Gastrocnemius medialis (tissue), 4 donors: ENCODE measurements at regions of chr11 and their contacts with region 1.

Region 1: DNA sequence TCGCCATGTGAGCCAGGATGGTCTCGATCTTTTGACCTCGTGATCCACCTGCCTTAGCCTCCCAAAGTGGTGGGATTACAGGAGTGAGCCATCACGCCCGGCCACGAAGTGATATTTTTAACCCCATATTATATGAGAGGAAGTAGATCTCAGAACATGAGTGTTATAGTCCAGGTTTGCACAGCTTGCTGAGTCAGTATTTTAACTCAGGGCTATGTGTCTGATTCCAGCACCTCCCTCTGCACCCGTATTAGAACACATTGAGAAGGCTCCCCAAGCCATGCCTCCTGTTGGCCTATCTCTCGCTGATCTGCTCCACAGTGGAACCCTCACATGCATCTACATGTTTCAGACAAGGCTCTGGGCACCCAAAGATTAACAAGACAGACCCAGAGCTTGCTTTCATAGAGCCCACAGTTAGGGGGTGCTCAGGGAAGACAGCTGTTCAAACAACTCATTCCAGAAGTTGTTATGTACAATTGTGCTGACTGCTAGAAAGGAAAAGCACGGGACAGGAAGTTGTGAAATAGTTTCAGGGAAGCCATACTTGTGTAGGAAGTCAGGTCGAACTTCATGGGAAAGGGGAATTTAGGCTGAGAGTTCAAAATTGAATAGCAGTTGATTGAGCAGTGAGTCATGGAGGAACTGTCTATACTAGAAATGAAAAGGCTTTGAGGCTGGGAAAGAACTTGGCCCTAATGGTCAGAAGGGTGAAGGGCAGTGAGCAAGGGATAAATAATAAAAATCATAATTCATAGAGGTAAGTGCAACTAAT is 49.3 kb upstream of the CLPB start:
- DNase-seq: peak in 1 of 2 donors; percentile 17
- ATAC-seq: peak; percentile 45 to 49
- H3K4me3 ChIP-seq: no peak overlapping the region
- H3K27ac ChIP-seq: no peak overlapping the region
- H3K4me1 ChIP-seq: no peaks in the 10 kb centered on the region
- H3K27me3 ChIP-seq: no peaks in the 10 kb centered on the region
- CTCF ChIP-seq: no peak
- POLR2A ChIP-seq: peak in 1 of 2 donors; percentile 9

Region 2: DNA sequence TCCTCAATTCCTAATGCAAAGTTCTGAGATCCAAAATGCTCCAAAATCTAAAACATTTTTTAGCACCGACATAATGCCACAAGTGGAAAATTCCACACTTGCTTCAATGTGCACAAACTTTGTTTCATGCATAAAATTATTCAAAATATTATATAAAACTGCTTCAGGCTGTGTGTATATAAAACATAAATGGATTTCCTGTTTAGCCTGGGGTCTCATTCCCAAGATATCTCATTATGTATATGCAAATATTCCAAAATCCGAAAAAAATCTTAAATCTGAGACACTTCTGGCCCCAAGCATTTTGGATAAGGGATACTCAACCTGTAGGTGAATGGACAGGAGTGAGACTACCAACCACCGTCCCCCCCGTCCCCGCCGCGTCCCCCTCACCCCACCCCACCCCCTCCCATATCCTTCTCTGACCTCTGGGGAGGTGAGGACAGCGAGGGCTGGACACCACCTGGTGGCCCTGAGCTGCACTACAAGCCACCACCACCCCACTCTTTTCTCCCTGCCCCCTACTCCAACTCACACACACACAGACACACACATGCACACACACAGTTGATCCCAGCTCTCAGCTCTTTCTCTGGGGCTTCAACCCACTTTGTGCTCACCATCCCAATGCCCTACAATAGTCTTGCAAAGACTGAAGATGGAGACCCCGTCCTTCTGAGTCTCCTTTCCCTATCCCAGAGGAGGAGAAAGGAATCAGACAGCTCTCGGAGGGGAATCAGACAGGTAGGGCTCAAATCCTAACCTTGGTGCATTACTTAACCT is 89.7 kb after region 1 on chr11:
- in situ Hi-C with region 1: loop called (anchors 5 to 10 kb)
- intact Hi-C with region 1: no loop called
- DNase-seq: no peak
- ATAC-seq: peak in 1 of 2 donors; percentile 66
- H3K4me3 ChIP-seq: no peak overlapping the region
- H3K27ac ChIP-seq: no peak overlapping the region
- H3K4me1 ChIP-seq: no peaks in the 10 kb centered on the region
- H3K27me3 ChIP-seq: no peaks in the 10 kb centered on the region
- CTCF ChIP-seq: peak in 3 of 5 experiments; percentile 28 to 62 (median 52)
- POLR2A ChIP-seq: no peak

Region 3: DNA sequence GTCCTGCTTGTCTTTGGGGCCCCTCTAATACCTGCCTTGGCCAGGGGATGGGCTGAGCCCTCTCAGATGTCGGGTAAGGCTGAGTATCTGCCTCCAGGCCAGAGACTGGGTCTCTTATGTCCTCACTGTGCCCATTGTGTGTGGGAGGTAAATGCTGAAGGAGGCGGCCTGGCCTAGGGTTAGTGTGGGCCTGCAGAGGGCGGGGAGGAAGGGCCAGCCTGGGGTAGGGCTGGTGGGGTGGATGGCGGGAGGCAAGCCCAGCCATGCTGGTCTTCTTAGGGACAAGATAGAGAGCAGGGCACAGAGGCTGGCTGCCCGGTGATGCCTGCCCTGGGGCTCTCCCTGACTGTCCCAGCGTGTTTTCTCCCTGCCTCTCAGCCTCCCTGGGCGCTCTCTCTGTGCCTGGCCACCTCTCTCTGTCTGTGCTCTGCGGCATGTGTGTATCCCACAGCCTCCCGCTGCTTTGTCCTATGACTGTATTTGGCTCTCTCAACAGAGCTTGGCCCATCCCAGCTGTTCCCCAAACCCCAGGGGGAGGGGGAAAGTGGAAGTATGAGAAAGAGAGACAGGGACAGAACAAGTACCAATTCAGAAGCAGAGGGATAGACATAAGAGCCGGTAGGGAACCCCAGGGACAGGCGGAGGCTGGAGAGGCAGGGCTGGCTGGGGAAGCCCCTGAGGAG is 133.6 kb after region 1 on chr11:
- in situ Hi-C with region 1: no loop called
- intact Hi-C with region 1: no loop called
- DNase-seq: peak in 1 of 2 donors; percentile 28
- ATAC-seq: peak; percentile 38 to 68
- H3K4me3 ChIP-seq: no peak overlapping the region
- H3K27ac ChIP-seq: peak overlapping the region in 1 of 4 donors; percentile 22
- H3K4me1 ChIP-seq: peaks cover 10 to 13% of the 10 kb centered on the region in 2 donors
- H3K27me3 ChIP-seq: no peaks in the 10 kb centered on the region
- CTCF ChIP-seq: no peak
- POLR2A ChIP-seq: no peak